CD8-positive, alpha-beta memory T cell (primary cell): ENCODE measurements at regions of chr1 and their contacts with region 1.

Region 1: DNA sequence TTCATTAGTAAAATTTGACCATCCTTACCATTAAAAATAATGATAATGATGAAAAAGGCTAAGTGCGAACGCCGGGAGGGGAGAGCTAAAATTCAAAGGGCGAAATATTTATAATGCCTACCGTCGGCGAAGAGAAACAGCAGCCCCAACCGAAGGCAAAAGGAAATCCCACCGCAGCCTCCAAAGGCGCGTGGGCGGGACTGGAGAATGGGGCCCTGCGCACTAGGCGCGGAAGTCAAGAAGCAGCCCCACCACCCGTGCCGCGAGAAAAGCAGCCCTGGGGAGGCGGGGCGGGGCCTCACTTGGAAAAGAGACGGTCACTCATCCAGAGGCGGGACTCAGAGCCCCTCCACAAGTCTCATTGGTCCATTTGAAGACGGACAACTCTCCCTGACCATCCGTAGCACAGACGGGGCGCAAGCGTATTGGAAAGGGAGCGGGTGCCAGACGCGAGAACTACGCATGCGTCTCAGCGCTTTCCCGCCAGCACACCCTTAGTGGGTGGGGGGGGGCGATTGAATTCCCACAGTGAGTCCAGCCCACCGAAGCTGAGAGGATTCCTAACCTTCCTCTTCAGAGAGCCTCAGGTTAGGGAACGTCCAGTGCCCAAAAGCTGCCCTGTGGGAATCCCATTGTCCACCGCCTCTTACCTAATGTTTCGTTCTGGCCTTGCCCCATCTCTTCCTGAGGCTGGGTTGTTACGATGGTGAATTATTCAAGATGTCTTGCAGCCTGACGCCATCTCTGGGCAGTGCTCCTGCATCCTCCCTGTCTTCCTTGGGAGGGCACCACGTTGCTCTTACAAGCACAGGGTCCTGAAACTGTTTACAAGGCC is 19.0 kb downstream of the MTX1 start:
- DNase-seq: peak; percentile 97 to 99 (median 98)
- H3K4me3 ChIP-seq: peak overlapping the region; percentile 93
- H3K4me3 Mint-ChIP-seq: peak overlapping the region; percentile 70 to 96 (median 87)
- H3K27ac ChIP-seq: peak overlapping the region; percentile 89
- H3K27ac Mint-ChIP-seq: peak overlapping the region; percentile 82 to 96 (median 94)
- H3K4me1 ChIP-seq: peaks cover 17% of the 10 kb centered on the region
- H3K4me1 Mint-ChIP-seq: peaks cover 23 to 24% (median 24%) of the 10 kb centered on the region in 3 donors
- H3K27me3 ChIP-seq: no peaks in the 10 kb centered on the region
- H3K27me3 Mint-ChIP-seq: peaks cover 0 to 2% of the 10 kb centered on the region in 2 donors

Region 2: DNA sequence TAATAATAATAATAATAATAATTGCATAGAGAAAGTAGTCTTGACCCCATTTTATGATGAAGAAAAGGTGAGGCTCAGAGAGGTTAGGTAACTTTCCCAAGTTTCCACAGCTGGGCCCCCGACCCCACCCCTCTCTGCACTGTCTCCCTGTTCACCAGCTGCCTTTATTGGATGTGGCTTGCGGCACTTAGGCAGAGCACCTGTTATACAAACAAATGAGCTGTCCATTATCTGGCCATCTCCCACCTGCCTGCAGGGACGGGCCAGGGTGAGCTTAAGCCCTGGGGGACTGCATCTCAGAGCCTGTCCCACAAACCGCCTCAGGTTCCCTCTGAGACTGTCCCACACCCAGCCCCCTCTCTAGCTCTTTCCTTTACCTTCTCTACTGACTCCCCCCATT is 109.9 kb before region 1 on chr1:
- CTCF ChIA-PET with region 1: no interaction called
- POLR2A ChIA-PET with region 1: no interaction called
- DNase-seq: no peak
- H3K4me3 ChIP-seq: no peak overlapping the region
- H3K4me3 Mint-ChIP-seq: no peak overlapping the region
- H3K27ac ChIP-seq: no peak overlapping the region
- H3K27ac Mint-ChIP-seq: no peak overlapping the region
- H3K4me1 ChIP-seq: no peaks in the 10 kb centered on the region
- H3K4me1 Mint-ChIP-seq: no peaks in the 10 kb centered on the region
- H3K27me3 ChIP-seq: no peaks in the 10 kb centered on the region
- H3K27me3 Mint-ChIP-seq: peaks cover 5 to 21% of the 10 kb centered on the region in 2 donors

Region 3: DNA sequence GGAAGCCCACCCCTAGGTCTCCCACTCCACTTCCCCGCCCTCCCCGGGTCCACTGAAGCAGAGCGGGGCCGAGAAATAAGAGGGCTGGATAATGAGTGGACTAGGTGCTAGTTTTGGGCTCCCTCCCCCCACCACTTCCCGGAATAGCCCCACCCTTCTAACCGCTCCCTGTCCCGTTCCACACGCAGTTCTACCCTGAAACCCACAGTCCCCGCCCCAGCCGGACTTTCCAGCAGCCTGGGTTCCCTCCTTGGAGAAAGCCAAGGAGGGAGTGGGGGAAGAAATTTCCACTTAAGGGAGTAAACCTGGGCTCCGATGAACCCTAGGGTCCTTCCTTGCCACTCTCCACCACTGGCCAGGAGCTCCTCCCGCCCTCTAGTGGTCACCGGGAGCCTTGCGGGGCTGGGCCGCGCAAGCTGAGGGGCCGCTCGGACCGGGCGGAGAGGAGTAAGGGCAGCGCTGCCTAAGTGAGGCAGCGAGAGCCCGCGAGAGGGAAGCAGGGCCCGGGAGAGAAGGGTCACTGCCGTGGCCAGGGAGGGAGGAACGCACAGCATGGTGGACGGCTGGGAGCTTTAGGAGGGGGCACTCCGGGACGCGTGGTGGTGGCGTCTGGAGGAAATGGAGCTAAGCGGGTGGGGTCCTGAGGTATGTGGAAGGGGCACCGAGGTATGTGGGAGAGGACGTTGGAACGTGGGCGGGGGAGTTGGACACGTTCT is 34.0 kb before region 1 on chr1:
- CTCF ChIA-PET with region 1: interaction called, 32 read pairs
- POLR2A ChIA-PET with region 1: no interaction called
- DNase-seq: peak; percentile 55 to 78 (median 58)
- H3K4me3 ChIP-seq: peak overlapping the region; percentile 78
- H3K4me3 Mint-ChIP-seq: peak overlapping the region; percentile 83 to 95 (median 89)
- H3K27ac ChIP-seq: peak overlapping the region; percentile 89
- H3K27ac Mint-ChIP-seq: peak overlapping the region; percentile 94 to 100 (median 98)
- H3K4me1 ChIP-seq: peaks cover 24% of the 10 kb centered on the region
- H3K4me1 Mint-ChIP-seq: peaks cover 25 to 39% (median 26%) of the 10 kb centered on the region in 3 donors
- H3K27me3 ChIP-seq: no peaks in the 10 kb centered on the region
- H3K27me3 Mint-ChIP-seq: no peaks in the 10 kb centered on the region

Region 4: GRCh38 chr1:155202731-155203505 is 24.6 kb before region 1 on chr1:
- CTCF ChIA-PET with region 1: interaction called, 67 read pairs
- POLR2A ChIA-PET with region 1: interaction called, 8 read pairs
- DNase-seq: peak in 1 of 5 donors; percentile 40
- H3K4me3 ChIP-seq: no peak overlapping the region
- H3K4me3 Mint-ChIP-seq: peak overlapping the region in 1 of 7 donors; percentile 24
- H3K27ac ChIP-seq: no peak overlapping the region
- H3K27ac Mint-ChIP-seq: peak overlapping the region in 2 of 8 donors; percentile 52 to 79
- H3K4me1 ChIP-seq: peaks cover 10% of the 10 kb centered on the region
- H3K4me1 Mint-ChIP-seq: peaks cover 10 to 12% (median 12%) of the 10 kb centered on the region in 3 donors
- H3K27me3 ChIP-seq: no peaks in the 10 kb centered on the region
- H3K27me3 Mint-ChIP-seq: peaks cover 0 to 3% of the 10 kb centered on the region in 2 donors

Region 5: DNA sequence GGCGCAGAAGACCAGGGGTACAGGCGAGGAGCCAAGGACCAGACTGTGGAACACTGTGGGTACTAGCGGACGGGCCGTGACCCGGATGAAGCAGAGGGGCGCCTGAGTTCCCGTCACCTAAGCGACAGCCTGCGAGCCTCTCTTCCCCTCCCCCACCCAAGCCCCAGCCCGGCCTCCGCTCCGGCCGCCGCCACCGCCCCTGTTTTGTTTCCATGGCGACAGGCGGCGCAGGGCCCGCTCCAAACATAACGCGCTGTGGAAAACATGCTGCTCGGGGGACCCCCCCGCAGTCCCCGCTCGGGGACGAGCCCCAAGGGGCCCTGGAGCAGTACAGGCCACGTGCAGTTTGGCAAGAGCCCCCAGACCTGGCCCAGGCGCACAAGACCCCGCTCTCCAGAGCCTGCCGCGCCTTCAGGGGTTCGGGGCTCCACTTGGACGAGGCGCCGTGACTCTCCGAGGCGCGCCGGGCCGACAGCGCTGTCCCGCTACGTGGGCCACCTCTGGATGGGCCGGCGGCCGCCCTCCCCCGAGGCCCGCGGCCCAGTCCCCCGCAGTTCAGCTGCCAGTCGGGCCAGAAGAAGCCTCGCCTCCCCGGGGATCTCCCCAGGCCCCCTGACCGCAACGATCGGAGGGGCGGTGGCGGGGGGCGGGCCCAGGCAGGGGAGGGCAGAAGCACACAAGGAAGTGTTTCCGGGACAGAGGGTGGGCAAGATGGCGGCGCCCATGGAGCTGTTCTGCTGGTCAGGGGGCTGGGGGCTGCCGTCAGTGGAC is 18.8 kb before region 1 on chr1 and contains the start of gene MTX1:
- CTCF ChIA-PET with region 1: interaction called, 67 read pairs
- POLR2A ChIA-PET with region 1: interaction called, 8 read pairs
- DNase-seq: peak; percentile 87 to 96 (median 92)
- H3K4me3 ChIP-seq: peak within 1 kb of the TSS; percentile 100
- H3K4me3 Mint-ChIP-seq: peak within 1 kb of the TSS; percentile 82 to 93 (median 89)
- H3K27ac ChIP-seq: peak within 1 kb of the TSS; percentile 99
- H3K27ac Mint-ChIP-seq: peak within 1 kb of the TSS; percentile 92 to 99 (median 96)
- H3K4me1 ChIP-seq: peaks cover 23% of the 10 kb centered on the region
- H3K4me1 Mint-ChIP-seq: peaks cover 18 to 28% (median 26%) of the 10 kb centered on the region in 3 donors
- H3K27me3 ChIP-seq: no peaks in the 10 kb centered on the region
- H3K27me3 Mint-ChIP-seq: peaks cover 0 to 3% of the 10 kb centered on the region in 2 donors
- total RNA-seq, gene MTX1: 67.6 to 73.2 TPM

Region 6: DNA sequence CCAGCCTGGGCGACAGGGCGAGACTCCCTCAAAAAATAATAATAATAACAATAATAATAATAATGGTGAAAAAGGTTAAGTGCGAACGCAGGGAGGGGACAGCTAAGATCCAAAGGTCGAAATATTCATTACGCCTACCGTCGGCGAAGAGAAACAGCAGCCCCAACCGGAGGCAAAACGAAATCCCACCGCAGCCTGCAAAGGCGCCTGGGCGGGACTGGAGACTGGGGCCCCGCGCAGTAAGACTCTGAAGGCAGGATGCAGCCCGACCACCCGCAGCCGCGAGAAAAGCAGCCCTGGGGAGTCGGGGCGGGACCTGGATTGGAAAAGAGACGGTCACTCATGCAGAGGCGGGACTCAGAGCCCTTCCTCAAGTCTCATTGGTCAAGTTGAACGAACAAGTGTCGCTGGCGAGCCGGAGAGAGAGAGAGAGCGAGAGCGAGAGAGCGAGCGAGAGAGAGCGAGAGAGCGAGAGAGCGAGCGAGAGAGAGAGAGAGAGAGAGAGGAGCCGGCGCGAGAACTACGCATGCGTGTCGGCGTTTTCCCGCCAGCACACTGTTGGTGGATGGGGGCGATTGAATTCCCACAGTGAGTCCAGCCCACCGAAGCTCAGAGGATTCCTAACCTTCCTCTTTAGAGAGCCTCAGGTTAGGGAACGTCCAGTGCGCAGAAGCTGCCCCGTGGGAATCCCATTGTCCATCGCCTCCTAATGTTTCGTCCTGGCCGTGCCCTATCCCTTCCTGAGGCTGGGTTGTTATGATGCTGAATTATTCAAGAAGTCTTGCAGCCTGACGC is 17.1 kb after region 1 on chr1:
- CTCF ChIA-PET with region 1: interaction called, 19 read pairs
- POLR2A ChIA-PET with region 1: interaction called, 9 read pairs
- DNase-seq: peak; percentile 89 to 99 (median 97)
- H3K4me3 ChIP-seq: peak overlapping the region; percentile 79
- H3K4me3 Mint-ChIP-seq: peak overlapping the region; percentile 82 to 95 (median 89)
- H3K27ac ChIP-seq: peak overlapping the region; percentile 75
- H3K27ac Mint-ChIP-seq: peak overlapping the region; percentile 89 to 99 (median 95)
- H3K4me1 ChIP-seq: peaks cover 38% of the 10 kb centered on the region
- H3K4me1 Mint-ChIP-seq: peaks cover 36 to 46% (median 40%) of the 10 kb centered on the region in 3 donors
- H3K27me3 ChIP-seq: no peaks in the 10 kb centered on the region
- H3K27me3 Mint-ChIP-seq: peaks cover 4 to 9% of the 10 kb centered on the region in 2 donors